Adrenal gland (tissue), 19 donors: ENCODE measurements at regions of chr9 and their contacts with region 1.

Region 1: DNA sequence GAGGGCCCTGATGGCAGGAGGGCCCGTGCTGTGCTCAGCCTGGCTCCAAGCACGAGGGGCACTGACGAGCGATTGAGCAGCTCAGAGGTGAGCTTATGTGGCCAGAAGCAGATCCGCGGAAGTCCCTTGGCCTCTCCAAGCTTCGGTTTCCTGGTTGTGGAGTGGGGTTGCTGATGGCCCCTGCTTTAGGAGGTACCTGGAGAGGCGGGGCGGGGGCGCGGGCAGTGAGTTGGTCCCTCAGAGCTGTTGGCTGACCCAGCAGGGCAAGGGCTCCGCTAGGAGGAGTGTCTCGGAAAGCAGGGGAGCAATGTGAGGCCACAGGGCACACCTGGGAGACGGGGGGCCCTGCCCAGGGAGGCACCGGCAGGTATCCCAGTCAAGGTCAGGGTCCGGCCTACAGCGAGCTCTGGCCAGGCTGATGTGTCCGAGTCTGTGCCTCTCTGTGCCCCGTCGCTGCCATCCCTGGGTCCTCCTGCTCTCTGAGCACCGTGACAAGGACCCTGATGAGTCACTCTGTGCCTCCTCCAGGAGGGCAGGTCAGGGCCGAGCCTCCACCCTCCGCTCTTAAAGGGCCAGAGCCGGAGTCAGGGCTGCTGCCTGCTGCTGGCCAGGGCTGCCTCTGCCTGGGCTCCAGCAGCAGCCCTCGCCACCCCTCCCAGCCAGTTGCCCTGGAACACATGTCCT is 14.8 kb downstream of the NCS1 start:
- DNase-seq: peak; percentile 84 to 96 (median 92)
- H3K4me3 ChIP-seq: peak overlapping the region in 2 of 4 donors; percentile 7 to 44
- H3K27ac ChIP-seq: peak overlapping the region; percentile 45 to 96 (median 82)
- H3K4me1 ChIP-seq: peaks cover 30 to 49% of the 10 kb centered on the region in 2 donors
- H3K27me3 ChIP-seq: no peaks in the 10 kb centered on the region
- CTCF ChIP-seq: no peak
- POLR2A ChIP-seq: peak in 1 of 2 donors; percentile 75

Region 2: GRCh38 chr9:130118841-130119518 is 68.0 kb before region 1 on chr9:
- intact Hi-C with region 1: loop called in 1 of 2 experiments (anchors 10 kb)
- DNase-seq: no peak
- H3K4me3 ChIP-seq: no peak overlapping the region
- H3K27ac ChIP-seq: peak overlapping the region in 2 of 5 donors; percentile 84 to 92
- H3K4me1 ChIP-seq: peaks cover 10 to 26% of the 10 kb centered on the region in 2 donors
- H3K27me3 ChIP-seq: no peaks in the 10 kb centered on the region
- CTCF ChIP-seq: no peak
- POLR2A ChIP-seq: no peak

Region 3: GRCh38 chr9:130235897-130236668 is 49.1 kb after region 1 on chr9:
- intact Hi-C with region 1: loop called in 1 of 2 experiments (anchors 10 kb)
- DNase-seq: peak; percentile 53 to 88 (median 69)
- H3K4me3 ChIP-seq: no peak overlapping the region
- H3K27ac ChIP-seq: peak overlapping the region in 1 of 5 donors; percentile 41
- H3K4me1 ChIP-seq: peaks cover 9 to 20% of the 10 kb centered on the region in 2 donors
- H3K27me3 ChIP-seq: no peaks in the 10 kb centered on the region
- CTCF ChIP-seq: peak; percentile 97 to 100 (median 98)
- POLR2A ChIP-seq: no peak